ENCODE measurements at regions of chr17 and their contacts with region 1.

Region 1: GRCh38 chr17:29931231-29931932 is 1.4 kb upstream of the SSH2 start:
- DNase-seq: peak; percentile 80
- ATAC-seq: peak; percentile 66
- H3K4me3 Mint-ChIP-seq: no peak overlapping the region
- H3K27ac Mint-ChIP-seq: no peak overlapping the region
- H3K4me1 Mint-ChIP-seq: peaks cover 20% of the 10 kb centered on the region
- H3K27me3 Mint-ChIP-seq: no peaks in the 10 kb centered on the region

Region 2: GRCh38 chr17:29293890-29294579 is 637.3 kb before region 1 on chr17 and contains the start of gene NUFIP2:
- CTCF ChIA-PET with region 1: interaction called, 4 read pairs
- POLR2A ChIA-PET with region 1: no interaction called
- intact Hi-C with region 1: loop called in 1 of 2 experiments (anchors 2 kb)
- DNase-seq: peak; percentile 99
- ATAC-seq: peak; percentile 93
- H3K4me3 Mint-ChIP-seq: peak within 1 kb of the TSS; percentile 100
- H3K27ac Mint-ChIP-seq: peak within 1 kb of the TSS; percentile 99
- H3K4me1 Mint-ChIP-seq: peaks cover 27% of the 10 kb centered on the region
- H3K27me3 Mint-ChIP-seq: no peaks in the 10 kb centered on the region
- total RNA-seq, gene NUFIP2: 55.1 to 93.1 TPM

Region 3: GRCh38 chr17:29589524-29590410 is 341.6 kb before region 1 on chr17 and contains the start of gene GIT1:
- CTCF ChIA-PET with region 1: interaction called, 5 read pairs
- POLR2A ChIA-PET with region 1: no interaction called
- intact Hi-C with region 1: loop called in 1 of 2 experiments (anchors 1 kb)
- DNase-seq: peak; percentile 92
- ATAC-seq: peak; percentile 69
- H3K4me3 Mint-ChIP-seq: peak within 1 kb of the TSS; percentile 94
- H3K27ac Mint-ChIP-seq: peak within 1 kb of the TSS; percentile 92
- H3K4me1 Mint-ChIP-seq: peaks cover 64% of the 10 kb centered on the region
- H3K27me3 Mint-ChIP-seq: no peaks in the 10 kb centered on the region
- total RNA-seq, gene GIT1: 60.5 to 74.1 TPM

Region 4: GRCh38 chr17:29760761-29761696 is 170.4 kb before region 1 on chr17:
- CTCF ChIA-PET with region 1: no interaction called
- POLR2A ChIA-PET with region 1: no interaction called
- intact Hi-C with region 1: loop called in 1 of 2 experiments (anchors 1 kb)
- DNase-seq: peak; percentile 97
- ATAC-seq: peak; percentile 89
- H3K4me3 Mint-ChIP-seq: peak overlapping the region; percentile 97
- H3K27ac Mint-ChIP-seq: peak overlapping the region; percentile 97
- H3K4me1 Mint-ChIP-seq: peaks cover 30% of the 10 kb centered on the region
- H3K27me3 Mint-ChIP-seq: no peaks in the 10 kb centered on the region

Region 5: GRCh38 chr17:29835435-29836351 is 95.7 kb before region 1 on chr17:
- CTCF ChIA-PET with region 1: interaction called, 12 read pairs
- POLR2A ChIA-PET with region 1: no interaction called
- intact Hi-C with region 1: no loop called
- DNase-seq: no peak
- ATAC-seq: no peak
- H3K4me3 Mint-ChIP-seq: no peak overlapping the region
- H3K27ac Mint-ChIP-seq: no peak overlapping the region
- H3K4me1 Mint-ChIP-seq: peaks cover 6% of the 10 kb centered on the region
- H3K27me3 Mint-ChIP-seq: no peaks in the 10 kb centered on the region

Region 6: DNA sequence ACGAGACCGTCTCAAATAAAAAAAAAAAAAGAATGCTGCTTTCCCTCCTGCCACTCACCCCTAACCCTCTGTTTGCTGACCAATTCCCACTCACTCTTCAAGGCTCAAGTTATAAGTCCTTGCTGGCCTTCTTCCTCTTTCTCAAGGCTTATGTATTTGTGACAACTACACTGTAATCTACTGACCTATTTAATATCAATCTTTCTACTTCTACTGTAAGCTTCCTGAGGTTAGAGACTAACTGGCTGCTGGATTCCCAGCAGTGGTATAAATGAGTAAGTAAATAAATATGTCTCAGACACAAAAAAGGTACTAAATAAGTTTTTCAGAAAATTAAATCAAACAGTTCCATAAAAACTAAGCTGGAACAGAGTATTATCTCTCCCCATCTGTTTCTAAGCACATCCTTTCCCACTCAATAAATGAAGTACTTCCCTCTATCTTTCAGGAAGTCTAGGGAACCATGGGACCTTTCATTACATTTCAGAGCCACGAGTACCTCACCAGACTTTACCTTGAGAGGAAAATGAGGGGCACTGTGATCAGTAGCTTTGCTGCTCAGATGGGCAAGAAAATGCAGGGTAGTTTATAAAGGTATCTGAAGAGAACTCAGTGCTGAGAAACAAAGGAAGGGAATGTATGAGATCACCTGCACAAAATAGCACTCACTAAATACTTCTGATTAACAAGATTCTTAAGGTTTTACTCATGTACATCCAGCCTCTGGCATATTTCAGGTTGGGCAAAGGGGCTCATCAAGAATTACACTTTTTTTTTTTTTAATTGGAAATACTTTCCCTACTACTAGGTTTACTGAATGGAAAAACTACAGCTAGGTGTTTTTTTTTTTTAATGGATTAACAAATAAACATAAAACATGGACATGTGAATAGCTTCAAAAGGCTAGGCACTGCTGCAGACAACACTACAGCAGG is 12.2 kb before region 1 on chr17:
- CTCF ChIA-PET with region 1: interaction called, 28 read pairs
- POLR2A ChIA-PET with region 1: no interaction called
- intact Hi-C with region 1: no loop called
- DNase-seq: no peak
- ATAC-seq: no peak
- H3K4me3 Mint-ChIP-seq: no peak overlapping the region
- H3K27ac Mint-ChIP-seq: no peak overlapping the region
- H3K4me1 Mint-ChIP-seq: peaks cover 42% of the 10 kb centered on the region
- H3K27me3 Mint-ChIP-seq: no peaks in the 10 kb centered on the region

Region 7: GRCh38 chr17:30378824-30379302 is 447.5 kb after region 1 on chr17 and contains the start of gene CPD:
- CTCF ChIA-PET with region 1: no interaction called
- POLR2A ChIA-PET with region 1: no interaction called
- intact Hi-C with region 1: loop called in 1 of 2 experiments (anchors 1 kb)
- DNase-seq: peak; percentile 98
- ATAC-seq: peak; percentile 87
- H3K4me3 Mint-ChIP-seq: peak within 1 kb of the TSS; percentile 82
- H3K27ac Mint-ChIP-seq: peak within 1 kb of the TSS; percentile 80
- H3K4me1 Mint-ChIP-seq: peaks cover 63% of the 10 kb centered on the region
- H3K27me3 Mint-ChIP-seq: no peaks in the 10 kb centered on the region
- total RNA-seq, gene CPD: 29.0 to 36.3 TPM